ENCODE measurements at regions of chr1 and their contacts with region 1.

Region 1: GRCh38 chr1:185317034-185317885 is at the start of gene IVNS1ABP:
- DNase-seq: peak; percentile 54
- H3K4me3 ChIP-seq: peak within 1 kb of the TSS; percentile 90
- CTCF ChIP-seq: peak; percentile 19

Region 2: DNA sequence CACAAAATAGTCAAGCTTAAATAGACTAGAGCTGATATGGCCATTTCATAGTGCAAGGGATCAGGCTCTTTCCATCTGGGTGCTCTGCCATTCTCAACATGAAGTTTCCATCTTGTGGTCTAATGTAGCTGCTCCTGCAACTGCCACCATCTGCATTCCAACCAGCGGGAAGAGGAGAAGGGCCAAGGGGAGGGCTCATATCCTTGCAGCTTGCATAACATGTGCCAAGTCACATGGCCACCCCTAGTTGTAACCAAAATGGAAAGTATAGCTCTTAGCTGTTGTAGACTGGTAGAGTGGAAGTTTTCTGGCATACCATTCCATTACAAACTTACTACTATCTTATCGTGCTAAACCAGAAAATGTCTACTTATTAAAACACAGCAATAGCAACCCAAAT is 38.7 kb after region 1 on chr1:
- CTCF ChIA-PET with region 1: no interaction called
- POLR2A ChIA-PET with region 1: no interaction called
- DNase-seq: no peak
- H3K4me3 ChIP-seq: no peak overlapping the region
- CTCF ChIP-seq: no peak

Region 3: DNA sequence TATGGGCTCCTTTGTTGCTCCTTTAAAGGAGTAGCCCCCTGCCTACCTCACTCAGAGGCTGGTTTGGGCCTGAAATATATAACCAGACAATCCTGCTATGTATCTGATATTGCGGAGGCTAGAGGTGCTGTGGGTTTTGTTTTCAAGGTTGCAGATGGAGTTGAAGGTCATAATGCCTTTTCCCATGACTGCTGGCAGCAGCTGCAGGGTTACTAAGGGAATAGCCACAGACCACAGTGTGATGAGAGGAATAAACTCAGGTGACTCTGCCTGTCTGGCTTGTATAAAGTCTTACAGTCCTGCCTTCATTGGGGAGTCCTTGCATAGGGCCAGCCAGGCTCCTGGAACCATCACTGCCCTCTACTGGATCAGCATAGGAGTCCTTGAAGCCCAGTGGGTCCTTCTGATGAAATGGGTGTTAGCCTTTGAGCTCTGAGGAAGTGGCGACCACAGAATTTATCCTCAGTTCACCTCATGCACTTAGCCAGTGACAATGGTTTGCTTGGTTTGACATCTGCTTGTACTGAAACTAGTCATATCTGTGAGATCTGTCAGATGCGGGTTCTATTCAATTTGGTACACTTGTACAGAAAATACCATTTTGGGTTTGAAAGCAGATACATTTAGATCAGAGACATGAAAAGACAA is 242.5 kb after region 1 on chr1:
- CTCF ChIA-PET with region 1: interaction called, 18 read pairs
- POLR2A ChIA-PET with region 1: interaction called, 6 read pairs
- DNase-seq: no peak
- H3K4me3 ChIP-seq: no peak overlapping the region
- CTCF ChIP-seq: peak; percentile 58

Region 4: DNA sequence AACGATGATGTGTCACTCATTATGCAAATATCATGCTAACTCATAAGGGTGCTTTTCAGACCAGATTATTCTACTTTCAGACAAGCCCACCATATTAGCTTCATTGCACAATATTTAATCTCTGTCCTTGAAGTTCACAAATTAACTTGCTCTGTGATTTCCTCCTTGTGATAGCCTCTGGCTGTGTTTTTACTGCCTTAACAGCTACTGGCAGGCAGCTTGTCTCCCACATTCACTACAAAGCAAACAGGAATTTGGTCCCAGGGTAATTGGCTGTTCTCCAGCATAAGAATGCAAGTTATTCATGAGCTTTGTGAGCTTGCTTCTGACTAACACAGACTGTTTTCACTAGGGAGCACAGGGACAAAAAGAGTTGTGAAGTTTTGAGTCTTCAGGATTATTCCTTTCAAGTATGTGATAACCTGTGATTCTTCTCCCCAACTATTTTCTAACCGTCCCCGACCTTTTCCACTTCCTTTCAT is 329.0 kb after region 1 on chr1:
- CTCF ChIA-PET with region 1: no interaction called
- POLR2A ChIA-PET with region 1: interaction called, 15 read pairs
- DNase-seq: peak; percentile 97
- H3K4me3 ChIP-seq: no peak overlapping the region
- CTCF ChIP-seq: no peak

Measured in AG04449 (cell line).